ENCODE measurements at regions of chr12 and their contacts with region 1.

Region 1: GRCh38 chr12:57844709-57845477 is 1.6 kb downstream of the CTDSP2 start:
- DNase-seq: peak; percentile 83
- ATAC-seq: peak; percentile 69

Region 2: DNA sequence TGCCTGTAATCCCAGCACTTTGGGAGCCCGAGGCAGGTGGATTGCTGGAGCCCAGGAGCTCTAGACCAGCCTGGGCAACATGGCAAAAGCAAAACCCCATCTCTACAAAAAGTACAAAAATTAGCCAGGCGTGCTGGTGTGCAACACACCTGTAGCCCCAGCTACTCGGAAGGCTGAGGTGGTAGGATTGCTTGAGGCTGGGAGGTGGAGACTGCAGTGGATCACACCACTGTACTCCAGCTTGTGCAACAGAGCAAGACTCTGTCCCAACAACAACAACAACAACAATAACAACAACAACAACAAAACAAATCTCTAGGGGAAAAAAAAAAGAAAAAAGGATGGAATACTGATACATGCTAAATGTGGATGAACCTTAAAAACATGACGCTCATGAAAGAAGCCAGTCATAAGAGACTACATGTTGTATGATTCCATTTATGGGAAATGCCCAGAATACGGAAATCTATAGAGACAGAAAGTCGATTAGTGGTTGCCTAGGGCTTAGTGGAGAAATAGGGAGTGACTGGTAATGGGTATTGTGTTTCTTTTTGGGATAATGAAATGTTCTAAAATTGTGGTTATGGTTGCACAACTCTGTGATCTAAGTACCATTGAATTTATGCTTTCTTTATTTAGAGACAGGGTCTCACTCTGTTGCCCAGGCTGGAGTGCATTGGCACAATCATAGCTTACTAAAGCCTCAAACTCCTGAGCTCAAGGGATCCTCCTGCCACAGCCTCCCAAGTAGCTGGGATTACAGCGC is 1315.4 kb before region 1 on chr12:
- intact Hi-C with region 1: loop called (anchors 5 kb)
- DNase-seq: no peak
- ATAC-seq: no peak

Region 3: GRCh38 chr12:57896434-57897201 is 51.7 kb after region 1 on chr12:
- intact Hi-C with region 1: no loop called
- DNase-seq: peak; percentile 87
- ATAC-seq: peak; percentile 73